ENCODE measurements at regions of chr17 and their contacts with region 1.

Region 1: DNA sequence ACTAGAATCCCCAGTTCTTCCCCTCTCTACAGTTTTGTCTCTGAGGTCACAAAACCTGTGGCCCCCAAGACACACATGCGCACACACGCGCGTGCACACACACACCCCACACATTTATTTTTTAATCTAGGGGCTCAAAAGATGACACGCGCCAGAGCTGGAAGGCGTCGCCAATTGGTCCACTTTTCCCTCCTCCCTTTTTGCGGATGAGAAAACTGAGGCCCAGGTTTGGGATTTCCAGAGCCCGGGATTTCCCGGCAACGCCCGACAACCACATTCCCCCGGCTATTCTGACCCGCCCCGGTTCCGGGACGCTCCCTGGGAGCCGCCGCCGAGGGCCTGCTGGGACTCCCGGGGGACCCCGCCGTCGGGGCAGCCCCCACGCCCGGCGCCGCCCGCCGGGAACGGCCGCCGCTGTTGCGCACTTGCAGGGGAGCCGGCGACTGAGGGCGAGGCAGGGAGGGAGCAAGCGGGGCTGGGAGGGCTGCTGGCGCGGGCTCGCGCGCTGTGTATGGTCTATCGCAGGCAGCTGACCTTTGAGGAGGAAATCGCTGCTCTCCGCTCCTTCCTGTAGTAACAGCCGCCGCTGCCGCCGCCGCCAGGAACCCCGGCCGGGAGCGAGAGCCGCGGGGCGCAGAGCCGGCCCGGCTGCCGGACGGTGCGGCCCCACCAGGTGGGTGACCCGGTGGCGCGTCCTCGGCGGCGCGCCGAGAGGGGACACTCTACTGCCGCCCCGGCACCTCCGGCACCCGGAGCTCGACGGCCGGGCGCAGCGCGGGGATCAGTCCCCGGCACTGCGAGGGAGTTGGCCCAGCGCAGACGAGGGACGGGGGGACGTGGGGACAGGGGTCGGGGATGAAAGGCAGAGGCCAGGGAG is at the start of gene STAT5A:
- DNase-seq: peak; percentile 77
- H3K4me3 Mint-ChIP-seq: peak within 1 kb of the TSS; percentile 98
- H3K27ac Mint-ChIP-seq: peak within 1 kb of the TSS; percentile 93
- H3K4me1 Mint-ChIP-seq: peaks cover 68% of the 10 kb centered on the region
- H3K27me3 Mint-ChIP-seq: no peaks in the 10 kb centered on the region
- total RNA-seq, gene STAT5A: 375 and 381 TPM in 2 replicates

Region 2: DNA sequence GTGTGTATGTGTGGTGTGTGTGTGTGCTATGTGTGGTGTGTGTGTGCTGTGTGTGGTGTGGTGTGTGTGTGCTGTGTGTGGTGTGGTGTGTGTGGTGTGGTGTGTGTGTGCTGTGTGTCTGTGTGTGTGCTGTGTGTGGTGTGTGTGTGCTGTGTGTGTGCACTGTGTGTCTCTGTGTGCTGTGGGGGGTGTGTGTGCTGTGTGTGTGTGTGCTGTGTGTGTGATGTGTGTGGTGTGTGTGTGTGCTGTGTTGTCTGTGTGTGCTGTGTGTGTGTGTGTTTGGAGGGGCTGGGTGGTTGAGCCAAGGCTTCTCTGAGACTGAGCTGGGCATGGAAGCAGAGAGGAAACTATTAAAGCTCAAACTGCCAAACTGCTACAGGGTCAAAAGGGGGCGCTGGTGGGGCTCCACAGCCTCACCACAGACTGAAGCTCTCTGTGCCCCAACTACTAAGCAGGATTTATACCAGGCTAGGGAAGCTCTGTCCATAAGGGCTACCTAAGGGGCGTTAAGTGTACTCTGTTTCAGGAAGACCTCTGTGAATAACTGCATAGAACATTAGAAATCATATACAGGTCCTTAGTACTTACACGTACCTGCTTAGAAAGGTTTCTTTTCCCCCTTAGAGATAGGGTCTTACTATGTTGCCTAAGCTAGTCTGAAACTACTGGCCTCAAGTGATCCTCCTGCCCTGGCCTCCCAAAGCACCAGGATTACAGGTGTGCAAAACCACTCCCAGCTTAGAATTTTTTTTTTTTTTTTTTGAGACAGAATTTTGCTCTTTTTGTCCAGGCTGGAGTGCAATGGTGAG is 66.0 kb before region 1 on chr17:
- intact Hi-C with region 1: loop called (anchors 1 kb)
- DNase-seq: peak; percentile 38
- H3K4me3 Mint-ChIP-seq: no peak overlapping the region
- H3K27ac Mint-ChIP-seq: peak overlapping the region; percentile 46
- H3K4me1 Mint-ChIP-seq: no peaks in the 10 kb centered on the region
- H3K27me3 Mint-ChIP-seq: no peaks in the 10 kb centered on the region

Region 3: GRCh38 chr17:42266918-42267778 is 21.0 kb before region 1 on chr17:
- intact Hi-C with region 1: loop called (anchors 1 kb)
- DNase-seq: peak; percentile 52
- H3K4me3 Mint-ChIP-seq: peak overlapping the region; percentile 73
- H3K27ac Mint-ChIP-seq: peak overlapping the region; percentile 98
- H3K4me1 Mint-ChIP-seq: peaks cover 67% of the 10 kb centered on the region
- H3K27me3 Mint-ChIP-seq: no peaks in the 10 kb centered on the region

Region 4: GRCh38 chr17:42312285-42313130 is 24.3 kb after region 1 on chr17:
- intact Hi-C with region 1: loop called (anchors 1 kb)
- DNase-seq: peak; percentile 68
- H3K4me3 Mint-ChIP-seq: peak overlapping the region; percentile 81
- H3K27ac Mint-ChIP-seq: peak overlapping the region; percentile 86
- H3K4me1 Mint-ChIP-seq: peaks cover 86% of the 10 kb centered on the region
- H3K27me3 Mint-ChIP-seq: no peaks in the 10 kb centered on the region

Region 5: DNA sequence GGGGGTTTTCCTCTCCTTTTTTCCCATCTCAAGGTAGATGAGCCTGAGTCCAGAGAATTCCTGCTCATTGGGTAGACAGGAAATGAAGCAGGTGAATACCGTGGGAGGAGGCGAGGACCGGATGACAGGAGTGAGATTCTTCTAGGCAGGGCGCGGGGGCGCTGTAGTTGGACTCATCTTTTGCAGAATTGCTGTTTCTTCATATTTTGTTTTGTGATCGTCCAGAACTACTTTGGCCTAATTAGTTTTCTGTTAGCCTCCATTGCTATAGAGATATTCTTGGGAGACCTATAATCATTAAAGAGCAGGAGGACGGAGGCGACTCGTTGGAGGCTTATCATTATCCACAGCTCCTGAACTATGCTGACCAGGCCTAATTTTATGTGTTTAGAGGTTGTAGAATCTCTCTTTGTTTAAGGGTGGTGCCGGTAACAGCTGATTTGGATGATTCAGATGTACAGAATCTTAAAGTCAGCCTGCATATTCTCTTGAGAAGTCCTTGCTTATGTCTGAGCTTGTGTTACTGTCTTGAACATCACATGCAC is 171.2 kb after region 1 on chr17:
- intact Hi-C with region 1: loop called (anchors 1 kb)
- DNase-seq: peak; percentile 5
- H3K4me3 Mint-ChIP-seq: peak overlapping the region; percentile 91
- H3K27ac Mint-ChIP-seq: peak overlapping the region; percentile 93
- H3K4me1 Mint-ChIP-seq: peaks cover 44% of the 10 kb centered on the region
- H3K27me3 Mint-ChIP-seq: peaks cover 10% of the 10 kb centered on the region